HCT116 (cell line): ENCODE measurements at regions of chr15 and their contacts with region 1.

Region 1: GRCh38 chr15:79853458-79854328 is 43.1 kb downstream of the MTHFS start:
- DNase-seq: peak; percentile 47
- ATAC-seq: peak; percentile 98
- H3K4me3 ChIP-seq: no peak overlapping the region
- H3K27ac ChIP-seq: no peak overlapping the region
- H3K4me1 ChIP-seq: no peaks in the 10 kb centered on the region
- H3K27me3 ChIP-seq: no peaks in the 10 kb centered on the region
- CTCF ChIP-seq: peak; percentile 63 to 98 (median 94); a peak in 5 of 6 replicates
- POLR2A ChIP-seq: no peak
- RAD21 ChIP-seq: peak; percentile 63

Region 2: DNA sequence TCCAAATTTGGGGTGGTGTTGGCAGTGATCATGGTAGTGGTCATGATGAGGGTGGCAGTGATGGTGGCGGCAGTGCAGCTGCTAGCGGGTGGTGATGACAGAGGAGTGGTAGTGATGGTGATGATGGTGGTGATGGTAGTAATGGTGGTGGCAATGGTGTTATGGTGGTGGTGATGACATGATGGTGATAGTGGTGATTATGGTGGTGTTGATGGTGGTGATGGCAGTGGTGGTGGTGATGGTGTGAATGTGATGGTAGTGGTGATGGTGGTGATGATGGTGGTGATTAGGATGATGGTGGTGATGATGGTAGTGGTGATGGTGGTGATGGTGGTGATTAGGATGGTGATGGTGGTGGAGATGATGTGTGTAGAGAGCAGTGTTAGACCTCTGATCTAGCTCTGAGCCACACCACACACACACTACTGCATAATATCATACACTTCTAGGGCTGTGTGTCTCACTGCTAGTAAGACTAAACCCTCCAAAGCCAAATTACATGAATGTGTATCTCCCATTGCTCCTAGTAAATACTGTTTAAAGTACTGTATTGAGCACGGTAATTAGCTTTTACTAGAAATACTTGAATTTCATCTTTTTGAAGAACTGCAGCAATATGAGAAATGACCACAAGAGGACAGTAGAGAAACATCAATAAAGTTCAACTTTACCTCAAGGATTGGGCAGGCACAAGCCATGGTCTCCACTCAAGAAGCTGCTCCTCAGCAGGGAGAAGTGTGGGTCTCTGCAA is 514.0 kb before region 1 on chr15:
- CTCF ChIA-PET with region 1: interaction called, 29 read pairs
- POLR2A ChIA-PET with region 1: no interaction called
- RAD21 ChIA-PET with region 1: interaction called in 1 of 2 experiments, 4 read pairs
- intact Hi-C with region 1: loop called (anchors 1 kb)
- DNase-seq: peak; percentile 29
- ATAC-seq: peak; percentile 70
- H3K4me3 ChIP-seq: no peak overlapping the region
- H3K27ac ChIP-seq: no peak overlapping the region
- H3K4me1 ChIP-seq: no peaks in the 10 kb centered on the region
- H3K27me3 ChIP-seq: no peaks in the 10 kb centered on the region
- CTCF ChIP-seq: peak; percentile 67 to 96 (median 76); a peak in 5 of 6 replicates
- POLR2A ChIP-seq: no peak
- RAD21 ChIP-seq: peak; percentile 72

Region 3: GRCh38 chr15:79562403-79562815 is 291.3 kb before region 1 on chr15:
- CTCF ChIA-PET with region 1: no interaction called
- POLR2A ChIA-PET with region 1: no interaction called
- RAD21 ChIA-PET with region 1: no interaction called
- intact Hi-C with region 1: no loop called
- DNase-seq: no peak
- ATAC-seq: no peak
- H3K4me3 ChIP-seq: no peak overlapping the region
- H3K27ac ChIP-seq: no peak overlapping the region
- H3K4me1 ChIP-seq: no peaks in the 10 kb centered on the region
- H3K27me3 ChIP-seq: peaks cover 7% of the 10 kb centered on the region; the same call in 1 of the 2 replicates
- CTCF ChIP-seq: no peak
- POLR2A ChIP-seq: no peak
- RAD21 ChIP-seq: no peak

Region 4: DNA sequence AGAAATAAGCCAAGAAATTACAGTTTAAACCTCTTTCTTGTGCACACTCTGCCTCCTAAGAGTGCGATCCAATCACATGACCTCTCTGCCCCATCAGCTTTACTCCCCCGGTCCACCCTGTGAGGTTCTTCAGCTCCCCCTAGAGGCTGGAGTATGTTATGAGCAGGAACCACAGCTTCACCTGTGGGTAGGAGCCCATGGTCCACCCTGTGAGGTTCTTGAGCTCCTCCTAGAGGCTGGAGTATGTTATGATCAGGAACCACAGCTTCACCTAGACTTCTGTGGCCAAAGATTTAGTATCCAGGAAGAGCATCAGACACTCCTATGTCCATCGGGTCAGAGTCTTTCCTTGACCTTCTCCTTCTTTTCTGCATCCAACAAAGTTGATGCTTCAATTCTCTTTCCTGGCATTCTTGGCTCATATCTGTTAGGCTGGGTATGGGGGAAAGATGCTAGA is 257.6 kb before region 1 on chr15:
- CTCF ChIA-PET with region 1: interaction called, 9 read pairs
- POLR2A ChIA-PET with region 1: no interaction called
- RAD21 ChIA-PET with region 1: interaction called in 1 of 2 experiments, 4 read pairs
- intact Hi-C with region 1: loop called (anchors 5 kb)
- DNase-seq: peak; percentile 95
- ATAC-seq: peak; percentile 99
- H3K4me3 ChIP-seq: no peak overlapping the region
- H3K27ac ChIP-seq: no peak overlapping the region
- H3K4me1 ChIP-seq: no peaks in the 10 kb centered on the region
- H3K27me3 ChIP-seq: peaks cover 14% of the 10 kb centered on the region
- CTCF ChIP-seq: peak; percentile 99 to 100 (median 99)
- POLR2A ChIP-seq: no peak
- RAD21 ChIP-seq: peak; percentile 89

Region 5: DNA sequence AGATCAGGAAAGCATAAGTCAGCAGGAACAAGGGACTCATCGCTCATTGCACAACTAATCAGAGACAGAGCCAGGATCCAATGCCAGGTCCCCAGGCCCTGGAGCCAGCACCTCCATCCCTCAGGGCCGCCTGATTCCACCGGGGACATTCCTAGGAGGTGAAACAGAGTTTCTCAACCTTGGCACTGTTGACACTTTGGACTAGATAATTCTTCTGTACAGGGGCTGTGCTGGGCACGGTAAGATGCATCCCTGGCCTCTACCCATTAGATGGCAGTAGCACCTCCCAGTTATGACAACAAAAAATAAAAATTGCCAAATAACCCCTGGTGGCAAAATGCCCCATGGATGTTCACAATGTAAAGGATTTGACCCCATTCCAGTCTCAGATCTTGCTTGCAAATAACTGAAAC is 84.6 kb before region 1 on chr15:
- CTCF ChIA-PET with region 1: interaction called, 8 read pairs
- POLR2A ChIA-PET with region 1: no interaction called
- RAD21 ChIA-PET with region 1: interaction called in 1 of 2 experiments, 3 read pairs
- intact Hi-C with region 1: loop called (anchors 1 kb)
- DNase-seq: peak; percentile 10
- ATAC-seq: peak; percentile 84
- H3K4me3 ChIP-seq: no peak overlapping the region
- H3K27ac ChIP-seq: no peak overlapping the region
- H3K4me1 ChIP-seq: no peaks in the 10 kb centered on the region
- H3K27me3 ChIP-seq: peaks cover 34% of the 10 kb centered on the region
- CTCF ChIP-seq: peak; percentile 60 to 72 (median 61); a peak in 5 of 6 replicates
- POLR2A ChIP-seq: no peak
- RAD21 ChIP-seq: peak; percentile 67

Region 6: GRCh38 chr15:79872358-79873017 is 18.8 kb after region 1 on chr15:
- CTCF ChIA-PET with region 1: interaction called, 16 read pairs
- POLR2A ChIA-PET with region 1: no interaction called
- RAD21 ChIA-PET with region 1: no interaction called
- intact Hi-C with region 1: no loop called
- DNase-seq: no peak
- ATAC-seq: no peak
- H3K4me3 ChIP-seq: no peak overlapping the region
- H3K27ac ChIP-seq: no peak overlapping the region
- H3K4me1 ChIP-seq: peaks cover 6 to 11% of the 10 kb centered on the region in 2 experiments; a peak in 2 of 4 replicates
- H3K27me3 ChIP-seq: no peaks in the 10 kb centered on the region
- CTCF ChIP-seq: no peak
- POLR2A ChIP-seq: no peak
- RAD21 ChIP-seq: no peak